Activated CD4-positive, alpha-beta memory T cell treated with anti-CD3 and anti-CD28 coated beads, Interleukin-2, amount 10 ng/mL, durations not matched to agents 7 days and 5 days (primary cell): ENCODE measurements at regions of chr3 and their contacts with region 1.

Region 1: GRCh38 chr3:4978204-4978965 is 852 bp upstream of the BHLHE40 start:
- DNase-seq: peak; percentile 92
- H3K4me3 Mint-ChIP-seq: peak overlapping the region; percentile 94
- H3K27ac Mint-ChIP-seq: peak overlapping the region; percentile 99
- H3K4me1 Mint-ChIP-seq: peaks cover 42% of the 10 kb centered on the region
- H3K27me3 Mint-ChIP-seq: no peaks in the 10 kb centered on the region

Region 2: DNA sequence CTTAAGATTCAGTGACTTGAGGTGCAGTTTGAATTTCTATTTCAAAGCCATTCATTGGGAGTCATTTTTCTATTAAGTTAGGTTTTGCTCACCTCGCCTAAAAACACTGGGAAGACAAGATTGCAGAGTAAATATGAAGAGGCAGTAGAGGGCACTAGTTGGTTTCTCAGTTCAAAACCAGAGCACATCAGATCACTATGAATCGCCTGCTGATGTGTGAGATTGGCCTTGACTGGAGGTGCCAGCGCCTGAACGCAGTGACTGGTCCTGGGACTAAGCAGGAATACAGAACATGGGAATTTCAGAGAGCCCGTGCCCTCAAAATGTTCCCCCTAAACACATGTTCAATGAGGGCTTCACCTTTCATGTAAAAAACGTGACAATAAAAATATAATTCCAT is 256.3 kb before region 1 on chr3:
- CTCF ChIA-PET with region 1: interaction called, 35 read pairs
- POLR2A ChIA-PET with region 1: interaction called, 26 read pairs
- DNase-seq: peak; percentile 45
- H3K4me3 Mint-ChIP-seq: no peak overlapping the region
- H3K27ac Mint-ChIP-seq: peak overlapping the region; percentile 50
- H3K4me1 Mint-ChIP-seq: peaks cover 50% of the 10 kb centered on the region
- H3K27me3 Mint-ChIP-seq: no peaks in the 10 kb centered on the region

Region 3: GRCh38 chr3:4807381-4808280 is 170.8 kb before region 1 on chr3:
- CTCF ChIA-PET with region 1: interaction called, 12 read pairs
- POLR2A ChIA-PET with region 1: interaction called, 16 read pairs
- DNase-seq: no peak
- H3K4me3 Mint-ChIP-seq: peak overlapping the region; percentile 21
- H3K27ac Mint-ChIP-seq: peak overlapping the region; percentile 26
- H3K4me1 Mint-ChIP-seq: peaks cover 72% of the 10 kb centered on the region
- H3K27me3 Mint-ChIP-seq: no peaks in the 10 kb centered on the region

Region 4: GRCh38 chr3:4888913-4889846 is 89.2 kb before region 1 on chr3:
- CTCF ChIA-PET with region 1: interaction called, 5 read pairs
- POLR2A ChIA-PET with region 1: interaction called, 11 read pairs
- DNase-seq: peak; percentile 52
- H3K4me3 Mint-ChIP-seq: peak overlapping the region; percentile 1
- H3K27ac Mint-ChIP-seq: peak overlapping the region; percentile 80
- H3K4me1 Mint-ChIP-seq: peaks cover 32% of the 10 kb centered on the region
- H3K27me3 Mint-ChIP-seq: peaks cover 3% of the 10 kb centered on the region

Region 5: DNA sequence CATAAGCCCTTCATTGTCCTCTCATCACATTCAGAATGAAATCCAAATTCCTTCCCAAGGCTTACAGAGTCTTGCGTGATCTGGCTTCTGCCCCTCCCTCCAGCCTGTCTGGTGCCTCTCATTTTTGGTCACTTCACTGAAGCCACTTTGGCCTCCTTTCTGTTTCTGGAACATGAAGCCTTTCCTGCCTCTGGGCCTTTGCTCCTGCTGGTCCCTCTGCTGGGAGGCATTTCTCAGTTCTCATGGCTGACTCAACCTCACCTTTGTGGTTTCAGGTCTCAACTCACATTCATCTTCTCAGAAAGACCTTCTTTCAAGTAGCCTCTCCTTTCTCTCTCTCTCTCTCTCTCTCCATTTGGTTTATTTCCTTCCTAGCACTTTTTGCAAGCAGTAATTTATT is 43.0 kb before region 1 on chr3:
- CTCF ChIA-PET with region 1: interaction called, 4 read pairs
- POLR2A ChIA-PET with region 1: interaction called, 10 read pairs
- DNase-seq: peak; percentile 39
- H3K4me3 Mint-ChIP-seq: no peak overlapping the region
- H3K27ac Mint-ChIP-seq: peak overlapping the region; percentile 4
- H3K4me1 Mint-ChIP-seq: peaks cover 23% of the 10 kb centered on the region
- H3K27me3 Mint-ChIP-seq: no peaks in the 10 kb centered on the region

Region 6: DNA sequence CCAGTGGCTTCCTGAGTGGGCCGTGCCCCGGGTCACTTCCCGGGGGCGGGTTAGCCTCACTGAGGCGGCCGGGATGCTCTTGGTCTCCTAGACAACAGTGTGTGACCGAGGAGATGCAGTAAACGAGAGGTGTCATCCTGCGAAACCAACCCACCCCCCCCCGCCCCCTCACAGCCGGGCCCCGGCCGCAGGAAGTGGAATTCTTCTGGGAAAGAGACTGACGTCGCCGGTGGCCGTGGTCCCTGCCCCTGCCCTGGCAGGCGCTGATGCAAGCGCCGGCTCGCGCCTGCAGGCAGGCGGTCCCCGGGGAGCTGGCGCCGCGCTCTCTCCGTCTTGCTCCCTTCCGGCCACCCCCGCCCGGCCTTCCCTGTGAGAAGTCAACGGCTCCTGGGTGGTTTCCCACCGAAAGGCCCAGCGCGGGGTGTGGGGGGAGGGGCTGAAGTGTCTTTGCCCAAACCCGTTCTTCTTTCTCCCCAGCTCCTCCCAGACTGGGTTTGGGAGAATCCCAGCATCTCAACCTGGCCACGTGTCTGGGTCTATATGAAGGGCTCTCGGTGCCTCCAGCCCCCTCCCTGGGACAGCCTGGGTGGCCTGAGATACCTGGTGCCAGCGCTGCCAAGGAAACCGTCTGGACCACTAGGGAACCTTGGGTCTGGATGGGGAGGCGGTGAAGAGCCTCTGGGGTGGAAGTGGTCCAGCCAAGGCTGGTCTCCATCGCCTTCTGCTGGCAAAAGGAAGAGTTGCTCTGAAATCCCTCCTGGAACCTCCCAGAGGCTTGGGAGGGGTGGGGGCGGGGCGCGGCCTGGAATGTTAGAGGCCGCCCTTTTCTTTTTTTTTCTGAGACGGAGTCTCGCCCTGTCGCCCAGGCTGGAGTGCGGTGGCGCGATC is 48.2 kb after region 1 on chr3:
- CTCF ChIA-PET with region 1: interaction called, 59 read pairs
- POLR2A ChIA-PET with region 1: interaction called, 588 read pairs
- DNase-seq: peak; percentile 69
- H3K4me3 Mint-ChIP-seq: peak overlapping the region; percentile 82
- H3K27ac Mint-ChIP-seq: peak overlapping the region; percentile 81
- H3K4me1 Mint-ChIP-seq: peaks cover 58% of the 10 kb centered on the region
- H3K27me3 Mint-ChIP-seq: no peaks in the 10 kb centered on the region

Region 7: GRCh38 chr3:5194341-5195159 is 216.2 kb after region 1 on chr3:
- CTCF ChIA-PET with region 1: interaction called, 3 read pairs
- POLR2A ChIA-PET with region 1: interaction called, 47 read pairs
- DNase-seq: peak; percentile 61
- H3K4me3 Mint-ChIP-seq: peak overlapping the region; percentile 2
- H3K27ac Mint-ChIP-seq: peak overlapping the region; percentile 96
- H3K4me1 Mint-ChIP-seq: peaks cover 84% of the 10 kb centered on the region
- H3K27me3 Mint-ChIP-seq: no peaks in the 10 kb centered on the region

Region 8: DNA sequence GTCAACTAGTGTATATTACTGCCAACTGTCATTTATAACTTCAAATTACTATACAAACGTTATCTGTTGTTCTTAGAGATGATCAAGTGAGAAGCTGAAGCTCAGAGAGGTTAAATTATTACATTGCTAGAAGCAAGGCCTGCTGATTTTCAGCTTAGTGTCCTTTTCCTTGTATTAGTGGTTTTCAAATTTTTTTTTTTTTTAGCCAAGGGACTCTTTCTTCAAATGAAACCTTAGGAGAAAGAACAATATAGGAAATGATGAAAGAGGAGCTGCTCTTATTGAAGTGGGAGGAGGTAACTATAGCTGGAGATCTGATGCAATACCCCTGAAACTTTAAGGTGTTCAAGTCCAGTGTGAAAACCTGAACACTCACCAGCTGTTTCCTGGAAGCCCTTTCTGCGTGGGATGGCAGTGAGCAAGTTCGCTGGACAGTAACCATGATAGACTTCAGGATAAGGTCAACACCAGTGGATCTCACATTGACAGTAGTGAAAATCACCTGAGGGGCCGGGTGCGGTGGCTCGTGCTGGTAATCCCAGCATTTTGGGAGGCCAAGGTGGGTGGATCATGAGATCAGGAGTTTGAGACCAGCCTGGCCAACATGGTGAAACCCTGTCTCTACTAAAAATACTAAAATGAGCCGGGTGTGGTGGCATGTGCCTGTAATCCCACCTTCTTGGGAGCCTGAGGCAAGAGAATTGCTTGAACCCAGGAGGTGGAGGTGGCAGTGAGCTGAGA is 585.3 kb after region 1 on chr3:
- CTCF ChIA-PET with region 1: no interaction called
- POLR2A ChIA-PET with region 1: no interaction called
- DNase-seq: no peak
- H3K4me3 Mint-ChIP-seq: no peak overlapping the region
- H3K27ac Mint-ChIP-seq: no peak overlapping the region
- H3K4me1 Mint-ChIP-seq: no peaks in the 10 kb centered on the region
- H3K27me3 Mint-ChIP-seq: no peaks in the 10 kb centered on the region